ENCODE measurements at regions of chr14 and their contacts with region 1.

Region 1: GRCh38 chr14:61837336-61838229 is 75.4 kb downstream of the SNAPC1 start:
- DNase-seq: peak; percentile 46
- ATAC-seq: peak; percentile 99
- H3K4me3 ChIP-seq: no peak overlapping the region
- H3K27ac ChIP-seq: no peak overlapping the region
- H3K4me1 ChIP-seq: no peaks in the 10 kb centered on the region; the same call in 1 of the 2 replicates
- H3K27me3 ChIP-seq: no peaks in the 10 kb centered on the region
- CTCF ChIP-seq: peak; percentile 93 to 96 (median 96)
- EP300 ChIP-seq: no peak
- POLR2A ChIP-seq: no peak
- RAD21 ChIP-seq: peak; percentile 100

Region 2: GRCh38 chr14:61154641-61155040 is 682.9 kb before region 1 on chr14:
- CTCF ChIA-PET with region 1: no interaction called
- POLR2A ChIA-PET with region 1: no interaction called
- RAD21 ChIA-PET with region 1: no interaction called
- SMC1A ChIA-PET with region 1: no interaction called
- in situ Hi-C with region 1: no loop called
- intact Hi-C with region 1: no loop called
- DNase-seq: no peak
- ATAC-seq: no peak
- H3K4me3 ChIP-seq: no peak overlapping the region
- H3K27ac ChIP-seq: no peak overlapping the region
- H3K4me1 ChIP-seq: no peaks in the 10 kb centered on the region
- H3K27me3 ChIP-seq: no peaks in the 10 kb centered on the region
- CTCF ChIP-seq: no peak
- EP300 ChIP-seq: no peak
- POLR2A ChIP-seq: no peak
- RAD21 ChIP-seq: no peak

Region 3: DNA sequence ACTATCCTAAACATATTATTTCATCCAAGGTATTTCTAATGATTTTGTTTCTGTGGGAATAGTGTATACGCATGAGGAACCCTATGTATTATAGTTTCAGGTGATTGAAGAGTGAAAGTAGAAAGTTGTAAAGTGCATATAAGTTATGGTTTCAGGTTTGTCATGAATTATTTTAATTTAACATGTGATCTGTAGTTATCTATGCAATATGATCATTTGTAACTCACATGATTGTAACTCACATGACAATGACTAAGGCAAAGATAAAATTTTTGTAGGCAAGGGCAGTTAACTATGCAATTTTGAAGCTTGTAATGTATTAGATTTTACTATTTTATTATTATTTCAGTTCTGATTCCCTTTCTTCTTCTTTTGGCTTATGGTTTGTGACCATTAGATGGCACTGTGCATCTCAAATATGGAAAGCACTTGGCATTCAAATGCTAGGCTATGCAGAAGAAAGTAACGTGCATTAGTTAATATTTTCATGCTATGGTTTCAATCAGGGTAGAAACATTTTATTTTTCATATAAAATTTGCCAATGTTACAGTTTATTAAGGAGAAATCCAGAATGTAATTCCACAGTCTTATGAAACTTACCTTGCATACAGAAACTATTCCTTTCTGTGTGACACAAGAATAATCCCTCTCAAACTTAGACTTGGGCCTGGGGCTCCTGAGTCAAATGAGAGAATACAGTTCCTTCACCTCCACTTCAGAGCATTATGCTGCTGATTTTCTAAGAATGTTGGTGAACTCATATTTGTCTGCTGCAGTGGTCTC is 540.7 kb before region 1 on chr14:
- CTCF ChIA-PET with region 1: interaction called, 42 read pairs
- POLR2A ChIA-PET with region 1: no interaction called
- RAD21 ChIA-PET with region 1: interaction called, 16 read pairs
- SMC1A ChIA-PET with region 1: interaction called, 17 read pairs
- in situ Hi-C with region 1: loop called (anchors 5 kb)
- intact Hi-C with region 1: loop called (anchors 5 kb)
- DNase-seq: peak; percentile 23
- ATAC-seq: peak; percentile 89
- H3K4me3 ChIP-seq: no peak overlapping the region
- H3K27ac ChIP-seq: no peak overlapping the region
- H3K4me1 ChIP-seq: peaks cover 12% of the 10 kb centered on the region
- H3K27me3 ChIP-seq: no peaks in the 10 kb centered on the region
- CTCF ChIP-seq: peak; percentile 50 to 66 (median 65)
- EP300 ChIP-seq: no peak
- POLR2A ChIP-seq: no peak
- RAD21 ChIP-seq: peak; percentile 89

Region 4: GRCh38 chr14:61503167-61503801 is 334.3 kb before region 1 on chr14:
- CTCF ChIA-PET with region 1: interaction called, 12 read pairs
- POLR2A ChIA-PET with region 1: no interaction called
- RAD21 ChIA-PET with region 1: interaction called, 6 read pairs
- SMC1A ChIA-PET with region 1: interaction called, 10 read pairs
- in situ Hi-C with region 1: no loop called
- intact Hi-C with region 1: no loop called
- DNase-seq: peak; percentile 94
- ATAC-seq: peak; percentile 93
- H3K4me3 ChIP-seq: peak overlapping the region; percentile 19; the same call in 1 of the 2 replicates
- H3K27ac ChIP-seq: peak overlapping the region; percentile 95
- H3K4me1 ChIP-seq: peaks cover 30% of the 10 kb centered on the region
- H3K27me3 ChIP-seq: no peaks in the 10 kb centered on the region
- CTCF ChIP-seq: no peak
- EP300 ChIP-seq: peak; percentile 30 to 87; a peak in 3 of 4 replicates
- POLR2A ChIP-seq: no peak
- RAD21 ChIP-seq: no peak

Region 5: GRCh38 chr14:61719344-61720293 is 118.0 kb before region 1 on chr14:
- CTCF ChIA-PET with region 1: interaction called, 5 read pairs
- POLR2A ChIA-PET with region 1: no interaction called
- RAD21 ChIA-PET with region 1: interaction called, 4 read pairs
- SMC1A ChIA-PET with region 1: interaction called, 10 read pairs
- in situ Hi-C with region 1: no loop called
- intact Hi-C with region 1: no loop called
- DNase-seq: no peak
- ATAC-seq: peak; percentile 48
- H3K4me3 ChIP-seq: no peak overlapping the region; the same call in 1 of the 2 replicates
- H3K27ac ChIP-seq: peak overlapping the region; percentile 15; the same call in 1 of the 2 replicates
- H3K4me1 ChIP-seq: peaks cover 20% of the 10 kb centered on the region
- H3K27me3 ChIP-seq: no peaks in the 10 kb centered on the region
- CTCF ChIP-seq: no peak
- EP300 ChIP-seq: no peak
- POLR2A ChIP-seq: no peak
- RAD21 ChIP-seq: no peak

Region 6: GRCh38 chr14:61750708-61751474 is 86.7 kb before region 1 on chr14:
- CTCF ChIA-PET with region 1: interaction called, 40 read pairs
- POLR2A ChIA-PET with region 1: interaction called, 8 read pairs
- RAD21 ChIA-PET with region 1: interaction called, 20 read pairs
- SMC1A ChIA-PET with region 1: interaction called, 39 read pairs
- in situ Hi-C with region 1: no loop called
- intact Hi-C with region 1: loop called (anchors 2 kb)
- DNase-seq: peak; percentile 83
- ATAC-seq: peak; percentile 93
- H3K4me3 ChIP-seq: peak overlapping the region; percentile 79
- H3K27ac ChIP-seq: peak overlapping the region; percentile 59
- H3K4me1 ChIP-seq: peaks cover 19% of the 10 kb centered on the region
- H3K27me3 ChIP-seq: no peaks in the 10 kb centered on the region
- CTCF ChIP-seq: no peak
- EP300 ChIP-seq: peak; percentile 45 to 66; a peak in 2 of 4 replicates
- POLR2A ChIP-seq: peak; percentile 85
- RAD21 ChIP-seq: no peak

Region 7: DNA sequence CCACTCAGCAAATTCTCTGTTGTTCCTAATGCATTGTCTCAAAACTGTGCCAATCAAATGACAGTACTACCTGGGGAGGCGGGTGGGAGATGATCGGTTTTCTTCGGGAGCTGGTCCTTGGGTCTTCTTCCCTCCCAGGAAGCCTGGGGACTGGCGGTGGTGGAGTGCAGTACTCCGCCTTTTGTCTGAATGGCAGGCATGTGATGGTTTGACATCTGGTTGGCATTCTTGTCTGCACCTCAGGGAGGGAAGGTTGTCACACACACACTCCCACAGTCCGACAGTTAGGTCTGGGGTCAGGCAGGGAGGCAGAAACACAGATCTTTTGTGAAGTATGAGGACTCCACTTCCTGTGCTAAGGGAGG is 39.4 kb after region 1 on chr14:
- CTCF ChIA-PET with region 1: no interaction called
- POLR2A ChIA-PET with region 1: no interaction called
- RAD21 ChIA-PET with region 1: no interaction called
- SMC1A ChIA-PET with region 1: no interaction called
- in situ Hi-C with region 1: no loop called
- intact Hi-C with region 1: no loop called
- DNase-seq: no peak
- ATAC-seq: no peak
- H3K4me3 ChIP-seq: no peak overlapping the region
- H3K27ac ChIP-seq: no peak overlapping the region
- H3K4me1 ChIP-seq: peaks cover 15% of the 10 kb centered on the region; the same call in 1 of the 2 replicates
- H3K27me3 ChIP-seq: no peaks in the 10 kb centered on the region
- CTCF ChIP-seq: no peak
- EP300 ChIP-seq: no peak
- POLR2A ChIP-seq: no peak
- RAD21 ChIP-seq: no peak

Region 8: GRCh38 chr14:61894452-61895077 is 57.0 kb after region 1 on chr14:
- CTCF ChIA-PET with region 1: interaction called, 10 read pairs
- POLR2A ChIA-PET with region 1: no interaction called
- RAD21 ChIA-PET with region 1: interaction called, 3 read pairs
- SMC1A ChIA-PET with region 1: interaction called, 5 read pairs
- in situ Hi-C with region 1: no loop called
- intact Hi-C with region 1: no loop called
- DNase-seq: no peak
- ATAC-seq: peak; percentile 69
- H3K4me3 ChIP-seq: no peak overlapping the region
- H3K27ac ChIP-seq: no peak overlapping the region
- H3K4me1 ChIP-seq: peaks cover 11% of the 10 kb centered on the region
- H3K27me3 ChIP-seq: no peaks in the 10 kb centered on the region
- CTCF ChIP-seq: peak; percentile 69 to 77 (median 69)
- EP300 ChIP-seq: no peak
- POLR2A ChIP-seq: no peak
- RAD21 ChIP-seq: peak; percentile 80

Region 9: GRCh38 chr14:61918998-61919397 is 81.4 kb after region 1 on chr14:
- CTCF ChIA-PET with region 1: no interaction called
- POLR2A ChIA-PET with region 1: no interaction called
- RAD21 ChIA-PET with region 1: no interaction called
- SMC1A ChIA-PET with region 1: no interaction called
- in situ Hi-C with region 1: no loop called
- intact Hi-C with region 1: no loop called
- DNase-seq: no peak
- ATAC-seq: no peak
- H3K4me3 ChIP-seq: no peak overlapping the region
- H3K27ac ChIP-seq: no peak overlapping the region
- H3K4me1 ChIP-seq: no peaks in the 10 kb centered on the region
- H3K27me3 ChIP-seq: no peaks in the 10 kb centered on the region; a peak in 1 of 4 replicates
- CTCF ChIP-seq: no peak
- EP300 ChIP-seq: no peak
- POLR2A ChIP-seq: no peak
- RAD21 ChIP-seq: no peak